ENCODE measurements at regions of chr10 and their contacts with region 1.

Region 1: GRCh38 chr10:51066231-51066630 is 8.1 kb upstream of the PRKG1 start:
- DNase-seq: no peak
- ATAC-seq: no peak

Region 2: GRCh38 chr10:51422311-51423120 is 356.3 kb after region 1 on chr10:
- intact Hi-C with region 1: loop called in 1 of 2 experiments (anchors 5 kb)
- DNase-seq: peak; percentile 36 to 69
- ATAC-seq: peak; percentile 87

Measured in left colon (tissue), 2 donors.